CD4-positive, alpha-beta memory T cell (primary cell): ENCODE measurements at regions of chr11 and their contacts with region 1.

Region 1: GRCh38 chr11:64742889-64743590 is 902 bp downstream of the RASGRP2 start:
- DNase-seq: peak; percentile 65 to 83 (median 74)
- H3K4me3 ChIP-seq: peak overlapping the region; percentile 95 to 98
- H3K4me3 Mint-ChIP-seq: peak overlapping the region; percentile 17 to 99 (median 97)
- H3K27ac ChIP-seq: peak overlapping the region; percentile 81
- H3K27ac Mint-ChIP-seq: peak overlapping the region in 1 of 7 donors; percentile 96
- H3K4me1 ChIP-seq: peaks cover 38% of the 10 kb centered on the region
- H3K4me1 Mint-ChIP-seq: peaks cover 21 to 62% (median 35%) of the 10 kb centered on the region in 4 donors
- H3K27me3 ChIP-seq: no peaks in the 10 kb centered on the region
- H3K27me3 Mint-ChIP-seq: no peaks in the 10 kb centered on the region

Region 2: DNA sequence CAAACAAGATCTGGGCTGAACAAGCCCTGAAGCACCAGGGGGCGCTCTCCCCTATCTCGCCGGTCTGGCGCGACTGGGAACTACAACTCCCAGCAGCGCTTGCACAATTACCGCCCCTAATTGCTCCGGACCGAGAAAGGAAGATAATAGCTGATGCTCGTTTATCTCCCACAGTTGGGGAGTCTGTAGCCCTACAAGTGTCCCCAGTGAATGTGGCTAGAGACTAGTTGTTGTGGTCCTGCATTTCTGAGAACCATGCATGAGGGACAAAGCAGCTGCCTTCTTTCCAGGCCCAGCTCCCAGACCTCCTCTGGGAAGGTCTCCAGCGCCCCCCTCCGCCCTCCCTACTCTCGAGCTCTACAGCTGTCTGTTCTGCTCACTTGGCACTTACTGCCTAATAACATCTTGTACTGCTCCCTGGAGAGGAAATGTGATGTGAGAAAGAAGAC is 54.5 kb before region 1 on chr11:
- CTCF ChIA-PET with region 1: interaction called, 37 read pairs
- POLR2A ChIA-PET with region 1: interaction called, 25 read pairs
- intact Hi-C with region 1: loop called (anchors 1 kb)
- DNase-seq: peak; percentile 83 to 87 (median 86)
- H3K4me3 ChIP-seq: peak overlapping the region in 1 of 2 donors; percentile 26
- H3K4me3 Mint-ChIP-seq: peak overlapping the region; percentile 40 to 80 (median 54)
- H3K27ac ChIP-seq: no peak overlapping the region
- H3K27ac Mint-ChIP-seq: peak overlapping the region in 6 of 7 donors; percentile 49 to 85 (median 69)
- H3K4me1 ChIP-seq: peaks cover 11% of the 10 kb centered on the region
- H3K4me1 Mint-ChIP-seq: peaks cover 7 to 19% (median 13%) of the 10 kb centered on the region in 4 donors
- H3K27me3 ChIP-seq: peaks cover 4% of the 10 kb centered on the region
- H3K27me3 Mint-ChIP-seq: peaks cover 15 to 23% of the 10 kb centered on the region in 2 donors

Region 3: DNA sequence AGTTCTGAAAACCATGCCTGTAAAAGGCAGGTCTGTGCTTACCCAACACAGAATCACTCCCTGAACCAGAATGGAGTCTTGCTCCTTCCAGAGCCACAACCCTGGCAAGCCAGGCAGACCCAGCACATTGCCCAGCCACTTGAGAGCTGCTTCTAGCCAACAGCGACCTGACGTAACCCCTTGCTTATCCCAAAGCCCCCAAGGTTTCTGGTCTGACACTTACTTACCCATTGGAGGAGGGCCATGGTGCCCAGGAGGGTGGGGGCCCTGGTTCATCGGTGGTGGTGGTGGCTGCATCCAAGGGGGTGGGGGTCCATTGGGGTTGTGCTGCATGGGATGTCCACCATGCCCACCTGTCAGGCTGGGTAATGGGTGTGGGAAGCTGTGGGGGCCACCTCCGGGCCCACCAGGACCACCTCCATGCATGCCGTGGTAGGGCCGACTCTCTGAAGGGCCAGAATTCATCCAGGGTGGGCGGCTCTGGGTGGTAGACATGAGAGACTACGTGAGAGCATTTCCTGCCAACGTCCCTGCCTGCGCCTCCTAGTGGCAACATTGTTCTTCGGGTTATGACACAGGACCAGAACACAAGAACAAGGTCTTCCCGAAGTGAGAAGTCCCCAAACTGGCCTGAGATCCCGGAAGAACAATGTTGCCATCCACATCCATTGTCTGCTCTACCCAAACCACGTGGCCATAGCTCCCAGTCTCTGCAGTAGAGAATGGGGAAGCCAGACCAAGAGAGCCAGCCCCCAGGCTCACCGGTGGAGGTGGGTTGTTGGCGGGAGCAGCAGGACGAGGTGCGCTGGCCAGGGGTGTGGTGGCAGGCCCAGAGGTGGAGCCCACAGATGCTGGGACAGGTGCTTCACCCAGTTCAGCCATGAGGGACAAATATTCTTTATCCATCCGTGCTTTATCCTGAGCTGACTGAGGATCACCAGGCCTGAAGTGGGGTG is 24.6 kb after region 1 on chr11:
- CTCF ChIA-PET with region 1: interaction called, 135 read pairs
- POLR2A ChIA-PET with region 1: interaction called, 1,500 read pairs
- intact Hi-C with region 1: loop called (anchors 1 kb)
- DNase-seq: peak; percentile 74 to 81 (median 78)
- H3K4me3 ChIP-seq: peak overlapping the region in 1 of 2 donors; percentile 11
- H3K4me3 Mint-ChIP-seq: peak overlapping the region; percentile 36 to 85 (median 71)
- H3K27ac ChIP-seq: peak overlapping the region; percentile 57
- H3K27ac Mint-ChIP-seq: peak overlapping the region; percentile 89 to 97 (median 94)
- H3K4me1 ChIP-seq: peaks cover 97% of the 10 kb centered on the region
- H3K4me1 Mint-ChIP-seq: peaks cover 62 to 96% (median 84%) of the 10 kb centered on the region in 4 donors
- H3K27me3 ChIP-seq: no peaks in the 10 kb centered on the region
- H3K27me3 Mint-ChIP-seq: no peaks in the 10 kb centered on the region

Region 4: GRCh38 chr11:64803163-64803845 is 60.3 kb after region 1 on chr11 and contains the start of gene MAP4K2:
- CTCF ChIA-PET with region 1: interaction called, 10 read pairs
- POLR2A ChIA-PET with region 1: interaction called, 70 read pairs
- intact Hi-C with region 1: loop called (anchors 2 kb)
- DNase-seq: peak; percentile 84 to 91 (median 89)
- H3K4me3 ChIP-seq: peak within 1 kb of the TSS; percentile 79
- H3K4me3 Mint-ChIP-seq: peak within 1 kb of the TSS; percentile 87 to 92 (median 90)
- H3K27ac ChIP-seq: peak within 1 kb of the TSS; percentile 93
- H3K27ac Mint-ChIP-seq: peak within 1 kb of the TSS; percentile 94 to 97 (median 96)
- H3K4me1 ChIP-seq: peaks cover 35% of the 10 kb centered on the region
- H3K4me1 Mint-ChIP-seq: peaks cover 9 to 48% (median 24%) of the 10 kb centered on the region in 4 donors
- H3K27me3 ChIP-seq: no peaks in the 10 kb centered on the region
- H3K27me3 Mint-ChIP-seq: no peaks in the 10 kb centered on the region
- total RNA-seq, gene MAP4K2: 122 to 128 TPM

Region 5: GRCh38 chr11:64854534-64855429 is 111.7 kb after region 1 on chr11:
- CTCF ChIA-PET with region 1: no interaction called
- POLR2A ChIA-PET with region 1: interaction called, 22 read pairs
- intact Hi-C with region 1: no loop called
- DNase-seq: peak in 2 of 5 donors; percentile 40 to 83
- H3K4me3 ChIP-seq: peak overlapping the region; percentile 6 to 21
- H3K4me3 Mint-ChIP-seq: peak overlapping the region; percentile 48 to 89 (median 74)
- H3K27ac ChIP-seq: peak overlapping the region; percentile 70
- H3K27ac Mint-ChIP-seq: peak overlapping the region; percentile 90 to 99 (median 93)
- H3K4me1 ChIP-seq: peaks cover 96% of the 10 kb centered on the region
- H3K4me1 Mint-ChIP-seq: peaks cover 60 to 92% (median 76%) of the 10 kb centered on the region in 4 donors
- H3K27me3 ChIP-seq: no peaks in the 10 kb centered on the region
- H3K27me3 Mint-ChIP-seq: no peaks in the 10 kb centered on the region

Region 6: GRCh38 chr11:64924102-64924851 is 181.2 kb after region 1 on chr11 and contains the start of gene PPP2R5B:
- CTCF ChIA-PET with region 1: no interaction called
- POLR2A ChIA-PET with region 1: interaction called, 12 read pairs
- intact Hi-C with region 1: no loop called
- DNase-seq: peak; percentile 87 to 95 (median 90)
- H3K4me3 ChIP-seq: peak within 1 kb of the TSS; percentile 61 to 85
- H3K4me3 Mint-ChIP-seq: peak within 1 kb of the TSS; percentile 93 to 99 (median 96)
- H3K27ac ChIP-seq: peak within 1 kb of the TSS; percentile 78
- H3K27ac Mint-ChIP-seq: peak within 1 kb of the TSS; percentile 98 to 100 (median 99)
- H3K4me1 ChIP-seq: peaks cover 20% of the 10 kb centered on the region
- H3K4me1 Mint-ChIP-seq: peaks cover 9 to 15% (median 11%) of the 10 kb centered on the region in 4 donors
- H3K27me3 ChIP-seq: no peaks in the 10 kb centered on the region
- H3K27me3 Mint-ChIP-seq: no peaks in the 10 kb centered on the region
- total RNA-seq, gene PPP2R5B: 14.0 to 15.8 TPM